WTC11 (cell line): ENCODE measurements at regions of chr11 and their contacts with region 1.

Region 1: GRCh38 chr11:118659314-118659952 is 20.0 kb downstream of the TREH start:
- DNase-seq: peak; percentile 99
- ATAC-seq: peak; percentile 88
- H3K4me3 Mint-ChIP-seq: peak overlapping the region; percentile 16; the same call in 1 of the 2 replicates
- H3K27ac Mint-ChIP-seq: no peak overlapping the region
- H3K4me1 Mint-ChIP-seq: peaks cover 41% of the 10 kb centered on the region
- H3K27me3 Mint-ChIP-seq: peaks cover 3% of the 10 kb centered on the region; the same call in 1 of the 2 replicates
- CTCF ChIP-seq: peak; percentile 89

Region 2: GRCh38 chr11:118592616-118593367 is 66.6 kb before region 1 on chr11:
- CTCF ChIA-PET with region 1: interaction called, 27 read pairs
- POLR2A ChIA-PET with region 1: no interaction called
- DNase-seq: no peak
- ATAC-seq: no peak
- H3K4me3 Mint-ChIP-seq: no peak overlapping the region
- H3K27ac Mint-ChIP-seq: no peak overlapping the region
- H3K4me1 Mint-ChIP-seq: no peaks in the 10 kb centered on the region
- H3K27me3 Mint-ChIP-seq: no peaks in the 10 kb centered on the region
- CTCF ChIP-seq: no peak

Region 3: DNA sequence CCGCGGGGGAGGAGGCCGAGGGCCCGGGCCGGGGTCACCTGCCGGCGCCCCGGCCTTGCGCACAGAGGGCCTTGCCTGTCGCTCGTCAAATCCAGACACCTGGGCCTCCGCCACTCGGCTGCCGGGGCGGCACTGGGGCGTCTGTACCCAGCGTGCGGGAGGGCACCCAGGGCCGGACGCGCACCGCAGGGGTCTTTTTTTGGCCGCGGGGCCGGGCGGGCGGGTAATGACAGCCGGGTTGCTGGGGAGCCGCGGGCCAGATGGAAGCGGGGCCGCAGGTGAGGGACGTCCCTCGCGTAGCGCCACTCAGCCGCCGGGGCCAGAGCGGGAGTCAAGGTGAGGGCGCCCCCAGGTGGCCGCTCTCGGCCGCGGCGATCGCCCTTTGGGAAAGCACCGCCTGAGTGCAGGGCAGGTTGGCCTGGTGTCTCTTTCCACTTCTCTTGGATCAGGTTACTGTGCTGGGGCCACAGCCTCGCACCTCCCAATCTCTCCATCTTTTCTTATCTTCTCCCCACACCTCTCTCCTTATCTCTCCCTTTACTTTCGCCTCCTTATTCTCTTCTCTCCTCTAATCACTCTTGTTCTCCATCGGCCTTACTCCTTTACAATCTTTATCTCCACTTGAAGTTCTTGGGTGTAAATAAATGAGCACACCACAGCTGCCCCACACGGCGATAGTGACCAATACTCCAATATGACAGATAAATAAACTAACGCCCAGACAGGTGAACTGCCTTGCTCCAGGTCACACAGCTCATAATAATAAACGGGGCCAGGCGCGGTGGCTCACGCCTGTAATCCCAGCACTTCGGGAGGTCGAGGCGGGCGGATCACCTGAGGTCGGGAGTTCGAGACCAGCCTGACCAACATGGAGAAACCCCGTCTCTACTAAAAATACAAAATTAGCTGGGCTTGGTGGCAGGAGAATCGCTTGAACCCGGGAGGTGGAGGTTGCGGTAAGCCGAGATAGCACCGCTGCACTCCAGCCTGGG is 48.3 kb before region 1 on chr11:
- CTCF ChIA-PET with region 1: interaction called, 64 read pairs
- POLR2A ChIA-PET with region 1: interaction called, 3 read pairs
- DNase-seq: peak; percentile 95
- ATAC-seq: peak; percentile 41
- H3K4me3 Mint-ChIP-seq: peak overlapping the region; percentile 57
- H3K27ac Mint-ChIP-seq: no peak overlapping the region
- H3K4me1 Mint-ChIP-seq: peaks cover 60% of the 10 kb centered on the region
- H3K27me3 Mint-ChIP-seq: peaks cover 60% of the 10 kb centered on the region
- CTCF ChIP-seq: peak; percentile 87

Region 4: GRCh38 chr11:118621071-118621783 is 38.2 kb before region 1 on chr11:
- CTCF ChIA-PET with region 1: interaction called, 16 read pairs
- POLR2A ChIA-PET with region 1: interaction called, 4 read pairs
- DNase-seq: peak; percentile 90
- ATAC-seq: peak; percentile 87
- H3K4me3 Mint-ChIP-seq: peak overlapping the region; percentile 85
- H3K27ac Mint-ChIP-seq: peak overlapping the region; percentile 86
- H3K4me1 Mint-ChIP-seq: peaks cover 60% of the 10 kb centered on the region
- H3K27me3 Mint-ChIP-seq: no peaks in the 10 kb centered on the region
- CTCF ChIP-seq: no peak

Region 5: GRCh38 chr11:118634431-118635236 is 24.8 kb before region 1 on chr11:
- CTCF ChIA-PET with region 1: interaction called, 78 read pairs
- POLR2A ChIA-PET with region 1: interaction called, 14 read pairs
- DNase-seq: peak; percentile 93
- ATAC-seq: peak; percentile 90
- H3K4me3 Mint-ChIP-seq: peak overlapping the region; percentile 73
- H3K27ac Mint-ChIP-seq: peak overlapping the region; percentile 93
- H3K4me1 Mint-ChIP-seq: peaks cover 29% of the 10 kb centered on the region
- H3K27me3 Mint-ChIP-seq: no peaks in the 10 kb centered on the region
- CTCF ChIP-seq: no peak

Region 6: GRCh38 chr11:118679483-118679882 is 20.1 kb after region 1 on chr11 and contains the start of gene TREH:
- CTCF ChIA-PET with region 1: interaction called, 12 read pairs
- POLR2A ChIA-PET with region 1: no interaction called
- DNase-seq: no peak
- ATAC-seq: no peak
- H3K4me3 Mint-ChIP-seq: no peak within 1 kb of the TSS
- H3K27ac Mint-ChIP-seq: no peak within 1 kb of the TSS
- H3K4me1 Mint-ChIP-seq: peaks cover 12% of the 10 kb centered on the region
- H3K27me3 Mint-ChIP-seq: peaks cover 19% of the 10 kb centered on the region
- CTCF ChIP-seq: no peak
- total RNA-seq, gene TREH: 0.09 TPM in 1 of 3 replicates, not detected in the others

Region 7: GRCh38 chr11:118791111-118791965 is 131.9 kb after region 1 on chr11 and contains the start of gene DDX6:
- CTCF ChIA-PET with region 1: interaction called, 10 read pairs
- POLR2A ChIA-PET with region 1: no interaction called
- DNase-seq: peak; percentile 91
- ATAC-seq: peak; percentile 41
- H3K4me3 Mint-ChIP-seq: peak within 1 kb of the TSS; percentile 98
- H3K27ac Mint-ChIP-seq: peak within 1 kb of the TSS; percentile 98
- H3K4me1 Mint-ChIP-seq: peaks cover 24% of the 10 kb centered on the region
- H3K27me3 Mint-ChIP-seq: no peaks in the 10 kb centered on the region
- CTCF ChIP-seq: no peak
- total RNA-seq, gene DDX6: 151 to 167 TPM (median 166 TPM) in 3 replicates